ENCODE measurements at regions of chr3 and their contacts with region 1.

Region 1: GRCh38 chr3:106206146-106206545 is 337.3 kb upstream of the CBLB start:
- DNase-seq: peak in 7 of 9 donors; percentile 12 to 48 (median 36)
- ATAC-seq: peak; percentile 81
- H3K4me3 ChIP-seq: peak overlapping the region; percentile 19
- H3K4me3 Mint-ChIP-seq: peak overlapping the region; percentile 51 to 79 (median 72)
- H3K27ac ChIP-seq: peak overlapping the region; percentile 32
- H3K27ac Mint-ChIP-seq: peak overlapping the region; percentile 3 to 91 (median 76)
- H3K4me1 ChIP-seq: peaks cover 14 to 18% of the 10 kb centered on the region in 2 donors
- H3K4me1 Mint-ChIP-seq: peaks cover 13 to 47% (median 40%) of the 10 kb centered on the region in 7 donors
- H3K27me3 ChIP-seq: no peaks in the 10 kb centered on the region
- H3K27me3 Mint-ChIP-seq: no peaks in the 10 kb centered on the region

Region 2: DNA sequence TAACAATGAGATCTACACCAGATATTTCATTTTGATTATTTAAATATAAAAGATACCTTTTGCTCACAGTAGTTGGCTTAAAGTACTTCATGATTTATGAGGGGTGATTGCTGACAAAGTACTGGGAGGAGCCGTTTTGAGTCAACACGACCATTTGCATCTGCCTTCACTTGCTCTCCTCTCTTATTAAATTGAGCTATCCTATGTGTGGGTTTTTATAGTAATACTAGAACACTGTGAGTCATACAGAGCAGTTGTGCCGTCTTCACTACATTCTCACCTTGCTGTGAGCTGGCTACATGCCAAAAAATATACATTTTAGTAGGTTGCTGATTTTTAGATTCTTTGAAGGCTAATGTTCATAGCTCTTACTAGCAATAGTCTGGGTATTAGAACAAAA is 678.2 kb before region 1 on chr3:
- CTCF ChIA-PET with region 1: no interaction called
- POLR2A ChIA-PET with region 1: no interaction called
- intact Hi-C with region 1: loop called in 1 of 2 experiments (anchors 10 kb)
- DNase-seq: no peak
- ATAC-seq: no peak
- H3K4me3 ChIP-seq: no peak overlapping the region
- H3K4me3 Mint-ChIP-seq: no peak overlapping the region
- H3K27ac ChIP-seq: no peak overlapping the region
- H3K27ac Mint-ChIP-seq: no peak overlapping the region
- H3K4me1 ChIP-seq: no peaks in the 10 kb centered on the region
- H3K4me1 Mint-ChIP-seq: peaks cover 0 to 13% (median 4%) of the 10 kb centered on the region in 7 donors
- H3K27me3 ChIP-seq: no peaks in the 10 kb centered on the region
- H3K27me3 Mint-ChIP-seq: no peaks in the 10 kb centered on the region

Region 3: DNA sequence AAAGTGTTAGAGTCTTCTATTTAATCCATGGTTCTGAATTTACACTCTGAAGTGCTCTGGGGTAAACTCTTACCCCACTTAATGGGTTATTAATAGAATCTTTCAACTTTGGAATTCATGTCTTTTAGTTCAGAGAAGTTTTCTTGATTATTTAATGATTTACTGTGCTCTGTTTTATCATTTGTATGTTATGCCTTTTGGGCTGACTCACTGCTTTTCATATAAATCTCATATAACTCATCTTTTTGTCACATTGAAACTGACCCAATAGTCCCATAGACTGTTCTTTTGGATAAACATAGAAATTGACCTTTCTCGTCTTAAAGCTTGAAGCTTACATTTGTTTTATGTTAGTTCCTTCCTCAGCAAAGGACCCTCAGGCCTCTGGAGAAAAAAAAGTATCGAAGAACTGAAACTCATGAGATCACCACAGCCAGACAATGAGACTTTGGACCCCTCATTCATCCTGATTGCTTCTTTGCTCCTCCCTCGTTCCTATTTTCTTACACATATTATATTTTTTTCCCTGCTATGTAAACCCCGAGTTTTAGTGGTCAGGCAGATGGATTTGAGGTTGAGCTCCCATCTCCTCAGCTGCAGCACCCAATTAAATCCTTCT is 108.2 kb before region 1 on chr3:
- CTCF ChIA-PET with region 1: no interaction called
- POLR2A ChIA-PET with region 1: no interaction called
- intact Hi-C with region 1: no loop called
- DNase-seq: no peak
- ATAC-seq: no peak
- H3K4me3 ChIP-seq: no peak overlapping the region
- H3K4me3 Mint-ChIP-seq: no peak overlapping the region
- H3K27ac ChIP-seq: no peak overlapping the region
- H3K27ac Mint-ChIP-seq: no peak overlapping the region
- H3K4me1 ChIP-seq: no peaks in the 10 kb centered on the region
- H3K4me1 Mint-ChIP-seq: peaks cover 0 to 4% (median 0%) of the 10 kb centered on the region in 7 donors
- H3K27me3 ChIP-seq: no peaks in the 10 kb centered on the region
- H3K27me3 Mint-ChIP-seq: no peaks in the 10 kb centered on the region

Region 4: DNA sequence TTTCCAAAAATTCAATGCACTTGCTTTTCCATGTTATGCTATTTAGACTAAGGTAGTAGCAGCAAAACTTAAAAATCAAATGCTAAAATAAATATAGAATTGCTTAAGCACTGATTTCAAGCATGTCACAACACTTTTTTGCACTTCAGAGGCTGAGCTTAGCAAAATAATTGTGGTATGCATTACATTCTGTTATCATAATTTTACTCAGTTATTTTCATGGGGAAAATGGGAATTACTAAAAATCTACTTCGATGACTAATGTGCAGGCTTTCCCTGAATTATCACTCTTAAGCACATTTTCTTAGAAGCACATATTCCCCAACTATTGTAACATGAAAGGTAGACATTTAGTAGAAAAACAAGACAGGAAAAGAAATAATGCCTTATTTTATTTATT is 14.9 kb before region 1 on chr3:
- CTCF ChIA-PET with region 1: interaction called, 3 read pairs
- POLR2A ChIA-PET with region 1: no interaction called
- intact Hi-C with region 1: loop called in 1 of 2 experiments (anchors 1 kb)
- DNase-seq: no peak
- ATAC-seq: no peak
- H3K4me3 ChIP-seq: no peak overlapping the region
- H3K4me3 Mint-ChIP-seq: no peak overlapping the region
- H3K27ac ChIP-seq: no peak overlapping the region
- H3K27ac Mint-ChIP-seq: no peak overlapping the region
- H3K4me1 ChIP-seq: no peaks in the 10 kb centered on the region
- H3K4me1 Mint-ChIP-seq: peaks cover 0 to 15% (median under 1%) of the 10 kb centered on the region in 7 donors
- H3K27me3 ChIP-seq: no peaks in the 10 kb centered on the region
- H3K27me3 Mint-ChIP-seq: no peaks in the 10 kb centered on the region